Activated T-helper 1 cell treated with anti-CD3 and anti-CD28 coated beads, Interleukin-12 subunit alpha, Interleukin-12 subunit beta, Interleukin-2, Interleukin-4 antibody, amounts not matched to agents 30 ng/mL and 10 ng/mL and 1 ng/mL, durations not matched to agents 14 hours and 24 hours and 36 hours (primary cell): ENCODE measurements at regions of chr12 and their contacts with region 1.

Region 1: DNA sequence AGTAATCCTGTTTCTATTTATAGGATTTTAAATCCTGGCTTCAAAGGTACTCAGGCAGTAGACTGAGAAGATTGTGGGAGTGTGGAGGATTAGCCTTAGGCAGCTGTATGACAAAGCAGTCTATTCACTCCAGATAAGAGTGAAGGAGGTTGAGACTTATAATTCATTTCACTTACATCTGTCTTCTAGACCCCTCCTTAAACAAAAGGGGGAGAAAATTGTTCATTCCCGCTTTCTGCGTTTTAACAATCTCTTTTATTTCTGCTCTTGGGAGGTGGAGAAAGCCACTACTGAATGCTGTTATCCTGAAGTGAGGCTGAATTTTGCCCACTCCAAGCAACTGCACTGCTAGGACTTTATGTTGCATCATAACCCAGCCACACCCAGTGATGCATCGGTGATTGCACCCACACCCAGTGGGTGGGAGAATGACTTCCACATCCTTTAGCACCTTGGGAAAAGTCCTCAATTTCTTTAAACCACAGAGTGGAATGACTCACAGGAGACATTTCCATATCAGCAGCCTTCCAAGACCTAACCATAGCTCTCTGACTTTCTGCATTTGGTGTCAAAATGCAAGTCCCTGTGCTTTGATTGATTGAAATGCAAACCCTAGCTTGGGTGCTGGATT is 382.5 kb upstream of the ATP2B1 start:
- DNase-seq: no peak
- H3K4me3 Mint-ChIP-seq: no peak overlapping the region
- H3K27ac Mint-ChIP-seq: no peak overlapping the region
- H3K4me1 Mint-ChIP-seq: peaks cover 16% of the 10 kb centered on the region
- H3K27me3 Mint-ChIP-seq: no peaks in the 10 kb centered on the region

Region 2: DNA sequence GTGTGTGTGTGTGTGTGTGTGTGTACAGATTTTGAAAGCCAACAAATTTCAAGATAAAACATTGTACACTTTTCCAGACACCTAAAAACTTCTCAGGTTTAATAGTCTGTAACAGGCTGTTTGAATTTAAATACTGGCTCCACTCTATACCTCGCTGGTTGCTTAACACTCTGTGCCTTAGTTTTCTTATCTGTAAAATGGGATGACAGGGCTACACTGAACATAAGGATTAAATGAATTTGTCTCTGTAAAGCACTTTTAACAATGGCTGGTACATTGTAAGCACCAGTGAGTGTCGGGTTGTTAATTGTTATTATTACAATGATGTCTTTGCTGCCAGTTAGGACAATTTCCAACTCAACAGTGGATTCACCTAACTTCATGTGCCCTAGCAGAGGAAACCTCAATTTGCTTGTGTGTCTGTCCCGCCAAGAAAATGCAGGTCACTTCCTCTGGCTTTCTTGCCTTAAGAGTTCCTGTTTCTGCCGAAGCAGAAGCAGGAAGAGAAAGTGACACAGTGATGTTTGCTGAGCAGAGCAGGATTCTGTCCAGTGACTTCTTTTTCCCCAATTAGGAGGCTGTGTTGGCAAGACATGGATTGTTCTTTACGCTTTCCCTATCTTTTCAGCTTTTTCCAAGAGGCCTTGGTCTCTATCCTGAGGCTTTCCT is 228.5 kb before region 1 on chr12:
- intact Hi-C with region 1: loop called (anchors 5 kb)
- DNase-seq: peak; percentile 44
- H3K4me3 Mint-ChIP-seq: peak overlapping the region; percentile 76
- H3K27ac Mint-ChIP-seq: peak overlapping the region; percentile 95
- H3K4me1 Mint-ChIP-seq: peaks cover 60% of the 10 kb centered on the region
- H3K27me3 Mint-ChIP-seq: no peaks in the 10 kb centered on the region

Region 3: DNA sequence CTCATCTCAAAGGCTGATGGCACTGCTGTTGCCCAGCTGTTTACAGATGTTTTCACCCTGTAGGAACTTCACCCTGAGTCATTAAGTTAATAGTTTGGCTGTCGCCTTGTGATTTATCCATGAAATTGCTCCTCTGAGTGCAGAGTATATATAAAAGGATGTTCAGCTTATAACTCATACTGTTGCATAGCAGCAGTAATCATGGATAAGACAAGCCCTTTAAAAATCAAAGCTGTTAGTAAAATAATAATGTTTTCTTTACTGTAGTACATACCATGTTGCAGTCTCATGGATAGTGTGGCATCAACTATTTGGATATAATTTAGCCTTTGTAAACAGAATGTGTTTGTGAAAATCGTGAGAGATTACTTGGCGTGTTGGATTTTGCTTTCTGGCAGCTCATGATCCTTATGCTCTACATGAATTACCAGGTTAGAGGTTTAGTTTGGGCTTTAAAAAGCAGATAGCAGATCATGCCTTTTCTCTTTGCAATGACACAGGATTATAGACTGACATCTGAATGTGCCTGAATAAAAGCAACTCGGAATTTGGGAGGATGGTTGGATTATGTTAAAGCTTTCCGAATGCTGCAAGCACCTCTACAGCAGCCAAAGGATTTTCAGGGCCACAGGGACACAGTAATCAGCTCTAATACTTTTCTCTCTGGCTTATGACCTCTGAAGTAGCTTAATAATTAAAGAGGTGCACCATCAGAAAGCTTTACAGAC is 102.8 kb before region 1 on chr12:
- intact Hi-C with region 1: no loop called
- DNase-seq: no peak
- H3K4me3 Mint-ChIP-seq: no peak overlapping the region
- H3K27ac Mint-ChIP-seq: no peak overlapping the region
- H3K4me1 Mint-ChIP-seq: no peaks in the 10 kb centered on the region
- H3K27me3 Mint-ChIP-seq: no peaks in the 10 kb centered on the region

Region 4: GRCh38 chr12:90058704-90059103 is 32.4 kb before region 1 on chr12:
- intact Hi-C with region 1: no loop called
- DNase-seq: no peak
- H3K4me3 Mint-ChIP-seq: no peak overlapping the region
- H3K27ac Mint-ChIP-seq: no peak overlapping the region
- H3K4me1 Mint-ChIP-seq: no peaks in the 10 kb centered on the region
- H3K27me3 Mint-ChIP-seq: no peaks in the 10 kb centered on the region